AG04450 (cell line): ENCODE measurements at regions of chr18 and their contacts with region 1.

Region 1: DNA sequence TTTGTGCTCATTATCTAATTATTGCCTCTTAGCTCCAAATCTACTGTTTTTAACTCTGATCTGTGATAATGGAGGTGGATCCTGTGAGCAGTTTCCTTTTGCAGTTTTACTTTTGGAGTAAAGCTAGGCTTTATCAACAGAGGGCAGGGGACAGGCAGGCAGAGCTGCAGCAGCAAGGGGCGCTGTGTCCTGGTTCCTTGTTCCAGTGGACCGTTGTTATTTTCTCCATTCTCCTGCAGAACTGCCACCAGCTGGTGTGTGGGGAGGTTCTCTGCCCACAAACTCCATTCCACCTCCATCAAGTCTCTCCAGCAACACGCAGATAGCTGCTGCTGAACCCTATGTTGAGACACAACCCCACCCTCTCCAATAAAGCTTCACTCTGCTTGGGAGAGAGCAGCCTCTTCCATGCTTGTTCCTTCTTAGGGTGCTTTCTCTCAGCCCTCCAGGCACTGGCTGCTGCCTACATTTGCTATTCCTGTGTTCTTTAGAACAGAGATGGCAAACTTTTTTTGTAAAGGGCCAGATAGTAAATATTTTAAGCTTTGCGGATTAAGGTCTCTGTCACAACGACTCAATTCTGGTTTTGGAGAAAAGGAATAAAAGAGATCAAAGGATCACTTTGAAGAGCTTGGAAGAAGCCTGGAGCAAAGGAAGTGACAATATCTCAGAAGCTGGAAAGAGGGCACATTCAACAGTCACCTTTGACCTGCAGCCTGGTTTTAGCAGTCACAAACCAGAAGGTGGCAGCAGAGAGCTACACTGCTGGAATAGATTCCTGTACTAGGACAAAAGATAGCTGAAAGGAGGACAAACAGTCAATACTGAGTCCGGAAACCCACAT is 208.8 kb downstream of the CCDC178 start:
- DNase-seq: peak; percentile 24
- H3K4me3 ChIP-seq: no peak overlapping the region
- H3K27ac ChIP-seq: no peak overlapping the region
- H3K27me3 ChIP-seq: no peaks in the 10 kb centered on the region
- CTCF ChIP-seq: peak; percentile 92

Region 2: DNA sequence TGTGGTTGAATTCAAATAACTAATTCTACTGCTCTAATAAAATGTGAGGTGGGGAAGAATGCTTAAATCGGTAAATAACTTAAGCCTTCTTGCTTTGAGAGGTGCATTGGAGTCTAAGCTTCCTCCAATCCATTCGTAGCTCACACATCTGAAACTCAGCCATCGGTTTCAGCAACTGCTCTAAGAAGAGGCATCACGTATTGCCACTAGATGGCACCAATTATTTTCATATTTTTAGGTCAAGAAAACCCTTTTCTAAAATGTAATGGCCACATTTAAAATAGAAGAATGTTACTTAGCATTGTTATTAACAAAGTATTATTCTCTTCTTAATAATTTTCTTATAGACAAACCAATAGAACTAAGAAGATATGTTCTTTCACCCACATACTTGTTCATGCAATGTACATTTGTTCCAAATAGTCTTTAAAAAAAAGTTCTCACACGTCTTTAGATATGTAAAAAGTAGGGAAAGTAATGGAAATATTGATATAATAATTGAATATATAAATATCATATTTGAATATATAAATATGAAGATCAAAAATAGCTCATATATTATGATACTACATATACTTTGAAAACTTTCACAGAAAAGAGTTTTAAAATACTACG is 21.0 kb before region 1 on chr18:
- CTCF ChIA-PET with region 1: interaction called, 49 read pairs
- POLR2A ChIA-PET with region 1: no interaction called
- DNase-seq: no peak
- H3K4me3 ChIP-seq: no peak overlapping the region
- H3K27ac ChIP-seq: no peak overlapping the region
- H3K27me3 ChIP-seq: no peaks in the 10 kb centered on the region
- CTCF ChIP-seq: peak; percentile 66

Region 3: DNA sequence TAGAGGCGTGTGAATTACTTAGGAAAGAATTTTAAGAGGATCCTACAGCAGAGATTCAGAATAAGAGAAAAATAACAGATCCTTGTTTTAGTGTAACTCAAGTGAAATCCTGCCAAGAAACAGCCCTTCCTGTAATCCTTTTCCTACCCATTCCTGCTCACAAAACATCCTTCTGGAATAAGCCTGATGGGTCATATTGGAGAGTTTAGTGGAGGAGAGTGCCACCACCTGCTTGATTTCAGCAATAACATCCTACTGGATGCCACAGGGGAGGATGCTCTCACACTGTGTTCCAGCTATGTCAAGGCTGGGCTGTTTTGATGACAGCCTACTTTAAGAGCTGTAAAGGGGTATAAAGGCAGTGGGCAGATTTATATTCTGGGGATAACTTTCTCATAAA is 263.6 kb after region 1 on chr18:
- CTCF ChIA-PET with region 1: interaction called, 11 read pairs
- POLR2A ChIA-PET with region 1: no interaction called
- DNase-seq: no peak
- H3K4me3 ChIP-seq: no peak overlapping the region
- H3K27ac ChIP-seq: no peak overlapping the region
- H3K27me3 ChIP-seq: no peaks in the 10 kb centered on the region
- CTCF ChIP-seq: peak; percentile 39

Region 4: GRCh38 chr18:33761363-33761762 is 529.7 kb after region 1 on chr18:
- CTCF ChIA-PET with region 1: interaction called, 21 read pairs
- POLR2A ChIA-PET with region 1: no interaction called
- DNase-seq: no peak
- H3K4me3 ChIP-seq: no peak overlapping the region
- H3K27ac ChIP-seq: no peak overlapping the region
- H3K27me3 ChIP-seq: no peaks in the 10 kb centered on the region
- CTCF ChIP-seq: peak; percentile 37